Ascending aorta (tissue), 2 donors: ENCODE measurements at regions of chr2 and their contacts with region 1.

Region 1: GRCh38 chr2:240998120-240998994 is at the start of gene SNED1:
- DNase-seq: peak; percentile 54 to 93
- H3K4me3 ChIP-seq: peak within 1 kb of the TSS; percentile 79 to 91
- H3K27ac ChIP-seq: peak within 1 kb of the TSS; percentile 92 to 93
- H3K4me1 ChIP-seq: peaks cover 39 to 55% of the 10 kb centered on the region in 2 donors
- H3K27me3 ChIP-seq: no peaks in the 10 kb centered on the region
- CTCF ChIP-seq: no peak
- total RNA-seq, gene SNED1: 84.3 TPM

Region 2: DNA sequence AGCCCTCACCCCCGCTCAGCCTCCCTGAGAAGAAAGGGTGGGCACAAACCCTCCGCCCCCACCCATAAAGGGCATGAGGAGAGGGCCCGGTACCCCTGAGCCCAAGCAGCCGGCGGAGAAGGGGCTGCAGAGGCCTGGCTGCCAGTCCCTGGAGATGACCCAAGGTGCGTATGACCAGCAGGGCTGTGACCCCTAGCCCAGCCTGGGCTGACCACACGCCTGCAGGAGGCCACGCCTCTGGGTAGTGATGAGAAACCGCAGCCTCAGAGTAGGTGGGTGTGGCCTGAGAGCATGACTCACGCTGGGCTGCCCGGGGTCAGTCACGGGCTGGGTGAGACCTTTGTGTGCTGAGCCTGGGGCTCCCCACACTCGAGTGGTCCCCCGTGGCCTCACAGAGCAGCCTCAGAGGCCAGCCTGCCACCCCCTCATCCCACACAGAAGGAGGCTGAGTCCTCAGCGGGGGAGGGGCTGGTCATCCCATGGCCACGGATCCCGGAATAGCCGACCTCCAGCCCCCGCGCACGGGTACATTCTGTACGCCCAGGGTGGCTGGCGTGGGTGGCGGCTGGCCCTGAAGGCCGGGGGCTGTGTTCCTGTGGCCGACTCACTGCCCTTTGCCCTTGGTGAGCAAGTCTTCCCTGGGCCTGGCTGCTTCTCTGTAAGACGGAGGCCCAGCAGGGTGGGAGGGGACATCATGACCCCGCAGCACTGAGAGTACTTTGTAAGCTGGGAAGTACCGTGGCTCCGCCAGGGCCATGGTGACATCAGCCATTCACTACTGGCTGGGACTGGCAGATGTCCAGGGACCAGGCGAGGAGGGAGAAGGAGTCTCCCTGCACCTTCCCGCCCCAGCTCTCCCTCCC is 747.1 kb before region 1 on chr2:
- intact Hi-C with region 1: loop called (anchors 5 kb)
- DNase-seq: peak; percentile 93 to 98
- H3K4me3 ChIP-seq: peak overlapping the region in 1 of 2 donors; percentile 19
- H3K27ac ChIP-seq: peak overlapping the region; percentile 87 to 93
- H3K4me1 ChIP-seq: peaks cover 14 to 22% of the 10 kb centered on the region in 2 donors
- H3K27me3 ChIP-seq: no peaks in the 10 kb centered on the region
- CTCF ChIP-seq: no peak

Region 3: GRCh38 chr2:241271641-241272297 is 273.4 kb after region 1 on chr2:
- intact Hi-C with region 1: loop called (anchors 10 kb)
- DNase-seq: peak; percentile 70 to 93
- H3K4me3 ChIP-seq: peak overlapping the region; percentile 98 to 100
- H3K27ac ChIP-seq: peak overlapping the region; percentile 95 to 98
- H3K4me1 ChIP-seq: peaks cover 14 to 28% of the 10 kb centered on the region in 2 donors
- H3K27me3 ChIP-seq: no peaks in the 10 kb centered on the region
- CTCF ChIP-seq: no peak

Region 4: DNA sequence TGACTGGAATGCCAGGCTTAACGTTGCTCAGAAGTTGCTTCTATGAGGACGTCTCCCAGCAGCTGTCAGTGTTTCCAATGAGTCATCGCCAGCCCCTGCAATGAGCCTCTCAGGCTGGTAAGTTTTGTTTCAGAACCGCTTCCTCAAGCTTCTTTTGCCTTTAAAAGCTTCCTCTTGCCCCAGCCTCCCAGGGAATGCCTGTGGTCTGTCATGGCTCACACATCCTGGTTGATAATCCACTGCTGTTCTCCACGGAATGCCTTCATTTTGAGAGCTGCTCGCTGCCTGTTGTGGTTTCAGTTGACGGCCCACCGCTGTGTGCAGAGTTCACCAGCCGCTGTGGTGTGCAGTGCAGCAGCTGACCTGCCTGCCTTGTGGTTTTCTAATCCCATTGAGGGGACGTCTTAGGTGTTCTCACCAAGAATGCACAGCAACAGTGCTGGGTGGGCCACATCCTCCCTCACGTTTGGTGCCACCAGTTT is 967.6 kb after region 1 on chr2:
- intact Hi-C with region 1: no loop called
- DNase-seq: no peak
- H3K4me3 ChIP-seq: peak overlapping the region in 1 of 2 donors; percentile 11
- H3K27ac ChIP-seq: no peak overlapping the region
- H3K4me1 ChIP-seq: no peaks in the 10 kb centered on the region
- H3K27me3 ChIP-seq: no peaks in the 10 kb centered on the region
- CTCF ChIP-seq: no peak